A673 (cell line): ENCODE measurements at regions of chr16 and their contacts with region 1.

Region 1: DNA sequence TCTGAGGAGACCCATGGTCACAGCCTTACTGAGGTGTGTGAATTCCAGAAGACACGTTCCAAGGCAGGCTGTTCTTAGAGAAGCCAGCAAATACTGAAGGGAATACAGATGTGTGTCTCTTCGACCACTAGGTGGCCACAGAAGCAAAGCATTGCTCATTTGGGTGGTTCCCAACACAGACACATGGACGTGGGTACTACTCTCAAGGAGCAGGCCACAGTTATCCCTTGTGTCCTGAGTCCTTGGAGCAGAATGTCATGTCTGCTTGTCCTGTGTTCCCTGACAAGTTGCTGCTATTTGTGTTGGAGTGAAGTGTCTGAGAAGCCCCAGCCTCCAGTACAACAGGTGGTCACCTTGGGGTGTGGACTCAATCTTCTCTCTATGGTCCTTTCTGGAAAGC is 30.3 kb downstream of the HMOX2 start:
- DNase-seq: peak; percentile 84
- H3K4me3 ChIP-seq: no peak overlapping the region
- H3K27ac ChIP-seq: no peak overlapping the region
- H3K4me1 ChIP-seq: no peaks in the 10 kb centered on the region
- H3K27me3 ChIP-seq: no peaks in the 10 kb centered on the region
- CTCF ChIP-seq: peak; percentile 84

Region 2: GRCh38 chr16:4548124-4548523 is 41.7 kb after region 1 on chr16:
- CTCF ChIA-PET with region 1: interaction called, 9 read pairs
- POLR2A ChIA-PET with region 1: no interaction called
- intact Hi-C with region 1: loop called (anchors 2 kb)
- DNase-seq: no peak
- H3K4me3 ChIP-seq: no peak overlapping the region
- H3K27ac ChIP-seq: no peak overlapping the region
- H3K4me1 ChIP-seq: no peaks in the 10 kb centered on the region
- H3K27me3 ChIP-seq: peaks cover 6% of the 10 kb centered on the region
- CTCF ChIP-seq: no peak